ENCODE measurements at regions of chr1 and their contacts with region 1.

Region 1: DNA sequence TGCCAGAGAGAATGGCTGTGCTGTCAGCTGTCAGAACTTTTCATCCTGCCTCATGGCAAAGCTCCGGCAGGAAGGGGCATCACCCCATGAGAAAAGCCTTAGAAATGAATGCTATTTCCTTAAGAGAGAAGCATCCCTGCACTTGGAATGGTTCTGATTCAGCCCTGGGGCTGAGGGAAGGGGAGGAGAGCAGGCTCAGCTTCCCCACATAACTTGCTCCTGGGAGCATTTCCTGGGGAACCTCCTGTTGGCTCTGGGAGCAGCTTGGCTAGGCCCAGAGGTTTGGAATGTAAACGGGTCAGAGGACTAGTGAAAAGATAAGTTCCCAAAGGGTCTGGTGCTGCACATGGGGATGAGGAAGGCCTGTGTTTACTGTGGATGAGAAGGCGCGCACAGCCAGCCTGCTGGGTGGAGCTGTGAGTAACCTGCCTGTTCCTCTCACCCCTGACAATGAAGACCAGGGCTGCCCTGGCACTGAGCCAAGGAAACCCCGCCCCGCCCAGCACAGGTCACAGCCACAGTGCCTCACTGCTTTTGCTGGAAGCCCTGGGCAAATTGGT is 5.0 kb downstream of the PRELP start:
- DNase-seq: peak; percentile 91
- H3K4me3 ChIP-seq: no peak overlapping the region
- H3K27ac ChIP-seq: peak overlapping the region; percentile 75 to 89 (median 80)
- H3K4me1 ChIP-seq: peaks cover 9 to 34% (median 19%) of the 10 kb centered on the region in 4 donors
- H3K27me3 ChIP-seq: no peaks in the 10 kb centered on the region
- CTCF ChIP-seq: no peak
- EP300 ChIP-seq: no peak
- POLR2A ChIP-seq: no peak

Region 2: DNA sequence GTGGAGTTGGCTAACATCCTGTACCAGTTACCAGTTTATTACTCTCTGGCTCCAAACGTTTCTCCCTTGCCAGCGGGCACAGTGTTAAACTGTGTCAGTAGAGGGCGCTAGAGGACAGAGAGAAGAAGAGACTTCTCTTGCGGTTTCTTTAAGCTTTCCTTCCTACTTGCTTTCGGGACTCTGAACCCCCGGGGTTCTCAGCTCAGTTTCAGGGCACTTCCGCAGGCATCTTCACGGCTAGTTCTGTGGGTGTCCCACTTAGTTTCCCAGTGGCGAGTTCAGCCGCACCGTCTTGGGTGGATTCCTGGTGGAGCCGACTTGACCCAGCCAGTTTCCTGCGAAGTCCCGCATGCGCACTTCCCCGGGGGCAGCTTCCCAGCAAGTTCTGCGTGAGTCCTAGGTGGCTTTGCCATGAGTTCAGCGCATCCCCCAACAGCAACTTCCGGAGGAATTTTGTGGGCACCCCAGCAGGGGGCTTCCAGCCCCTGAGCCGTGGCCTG is 213.2 kb before region 1 on chr1:
- in situ Hi-C with region 1: loop called in 3 of 4 experiments (anchors 10 kb)
- intact Hi-C with region 1: no loop called
- DNase-seq: peak; percentile 90
- H3K4me3 ChIP-seq: peak overlapping the region; percentile 40 to 68 (median 46)
- H3K27ac ChIP-seq: peak overlapping the region; percentile 76 to 87 (median 80)
- H3K4me1 ChIP-seq: peaks cover 2 to 22% (median 8%) of the 10 kb centered on the region in 4 donors
- H3K27me3 ChIP-seq: no peaks in the 10 kb centered on the region
- CTCF ChIP-seq: peak; percentile 94 to 97 (median 95)
- EP300 ChIP-seq: no peak
- POLR2A ChIP-seq: no peak

Region 3: GRCh38 chr1:203351037-203352013 is 129.3 kb before region 1 on chr1 and contains the start of gene FMOD:
- in situ Hi-C with region 1: loop called in 2 of 4 experiments (anchors 10 to 25 kb)
- intact Hi-C with region 1: no loop called
- DNase-seq: peak; percentile 62
- H3K4me3 ChIP-seq: peak within 1 kb of the TSS in 3 of 4 donors; percentile 9 to 36 (median 11)
- H3K27ac ChIP-seq: peak within 1 kb of the TSS; percentile 39 to 72 (median 54)
- H3K4me1 ChIP-seq: peaks cover 0 to 23% (median 18%) of the 10 kb centered on the region in 4 donors
- H3K27me3 ChIP-seq: no peaks in the 10 kb centered on the region
- CTCF ChIP-seq: no peak
- EP300 ChIP-seq: no peak
- POLR2A ChIP-seq: no peak
- total RNA-seq, gene FMOD: 13.5 to 44.0 (median 17.8) TPM

Measured in transverse colon (tissue), 4 donors.